Common myeloid progenitor, CD34-positive (primary cell): ENCODE measurements at regions of chr1 and their contacts with region 1.

Region 1: DNA sequence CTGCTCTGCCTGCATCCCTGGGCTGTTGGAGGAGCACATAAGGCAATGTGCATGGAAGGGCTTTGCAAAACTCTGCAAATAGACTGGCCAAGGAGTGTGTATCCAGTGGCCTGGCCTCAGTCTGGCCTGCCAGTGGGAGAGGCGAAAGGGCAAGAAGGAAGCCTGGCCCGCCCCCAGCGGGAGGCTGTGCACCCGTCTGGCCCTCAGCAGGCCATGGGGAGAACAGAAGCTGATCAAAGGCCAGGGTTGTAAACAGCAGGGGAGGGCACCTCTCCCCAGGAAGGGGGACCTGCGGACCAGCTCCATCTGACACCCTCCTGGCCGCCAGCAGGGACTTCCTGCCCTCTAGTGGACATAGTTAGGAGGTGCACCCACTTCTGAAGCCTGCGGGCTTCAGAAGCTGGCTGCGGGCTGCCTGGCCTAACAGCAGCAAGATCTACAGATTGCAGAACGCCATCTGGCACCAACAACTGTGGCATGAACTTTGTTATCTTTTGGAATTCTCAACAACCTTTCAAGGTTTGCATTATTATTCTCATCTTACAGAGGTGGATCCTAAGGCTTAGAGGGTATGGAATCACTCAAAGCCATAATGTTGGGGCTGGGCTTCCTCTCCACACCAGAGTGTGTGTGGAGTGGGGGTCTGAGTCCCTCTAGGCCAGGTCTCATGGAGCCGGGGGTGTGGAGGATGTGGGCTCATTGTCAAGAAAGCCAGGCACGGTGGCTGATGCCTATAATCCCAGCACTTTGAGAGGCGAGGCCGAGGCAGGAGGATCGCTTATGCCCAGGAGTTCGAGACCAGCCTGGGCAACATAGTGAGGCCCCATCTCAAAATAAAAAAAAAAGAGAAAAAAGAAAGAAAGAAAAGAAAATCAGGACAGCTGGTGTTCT is 18.9 kb upstream of the CDK18 start:
- DNase-seq: peak; percentile 72 to 89 (median 86)
- H3K4me3 ChIP-seq: no peak overlapping the region
- H3K27ac ChIP-seq: no peak overlapping the region
- H3K4me1 ChIP-seq: peaks cover 0 to 7% (median 0%) of the 10 kb centered on the region in 4 experiments
- H3K27me3 ChIP-seq: peaks cover 0 to 62% (median 29%) of the 10 kb centered on the region in 5 experiments

Region 2: DNA sequence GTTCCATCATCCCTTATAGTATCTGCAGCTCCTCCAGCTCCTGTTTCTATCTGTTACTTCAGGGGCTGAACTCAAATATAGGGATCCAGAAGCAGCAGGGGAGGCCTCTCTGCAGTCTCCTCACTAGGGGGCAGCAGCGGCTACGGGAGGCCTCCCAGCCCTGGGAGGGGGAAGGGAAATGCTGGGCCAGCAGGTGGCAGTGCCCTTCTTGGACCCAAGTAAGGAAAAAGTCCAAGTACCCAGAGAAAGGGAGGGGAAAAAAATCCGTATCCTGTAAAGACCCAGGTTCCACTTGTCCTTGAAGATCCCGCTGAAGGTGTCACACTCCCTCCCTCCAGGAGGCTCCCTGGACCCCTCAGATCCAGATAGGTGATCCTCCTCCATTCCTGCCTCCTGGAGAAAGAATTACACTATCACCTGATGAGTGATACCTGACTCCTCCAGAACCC is 149.9 kb before region 1 on chr1:
- CTCF ChIA-PET with region 1: interaction called, 22 read pairs
- POLR2A ChIA-PET with region 1: no interaction called
- DNase-seq: peak; percentile 80 to 84 (median 84)
- H3K4me3 ChIP-seq: no peak overlapping the region
- H3K27ac ChIP-seq: no peak overlapping the region
- H3K4me1 ChIP-seq: no peaks in the 10 kb centered on the region
- H3K27me3 ChIP-seq: peaks cover 0 to 5% (median 0%) of the 10 kb centered on the region in 5 experiments

Region 3: GRCh38 chr1:205374228-205375078 is 111.1 kb before region 1 on chr1:
- CTCF ChIA-PET with region 1: interaction called, 14 read pairs
- POLR2A ChIA-PET with region 1: no interaction called
- DNase-seq: no peak
- H3K4me3 ChIP-seq: no peak overlapping the region
- H3K27ac ChIP-seq: no peak overlapping the region
- H3K4me1 ChIP-seq: peaks cover 0 to 12% (median 2%) of the 10 kb centered on the region in 4 experiments
- H3K27me3 ChIP-seq: peaks cover 2 to 23% (median 13%) of the 10 kb centered on the region in 5 experiments

Region 4: DNA sequence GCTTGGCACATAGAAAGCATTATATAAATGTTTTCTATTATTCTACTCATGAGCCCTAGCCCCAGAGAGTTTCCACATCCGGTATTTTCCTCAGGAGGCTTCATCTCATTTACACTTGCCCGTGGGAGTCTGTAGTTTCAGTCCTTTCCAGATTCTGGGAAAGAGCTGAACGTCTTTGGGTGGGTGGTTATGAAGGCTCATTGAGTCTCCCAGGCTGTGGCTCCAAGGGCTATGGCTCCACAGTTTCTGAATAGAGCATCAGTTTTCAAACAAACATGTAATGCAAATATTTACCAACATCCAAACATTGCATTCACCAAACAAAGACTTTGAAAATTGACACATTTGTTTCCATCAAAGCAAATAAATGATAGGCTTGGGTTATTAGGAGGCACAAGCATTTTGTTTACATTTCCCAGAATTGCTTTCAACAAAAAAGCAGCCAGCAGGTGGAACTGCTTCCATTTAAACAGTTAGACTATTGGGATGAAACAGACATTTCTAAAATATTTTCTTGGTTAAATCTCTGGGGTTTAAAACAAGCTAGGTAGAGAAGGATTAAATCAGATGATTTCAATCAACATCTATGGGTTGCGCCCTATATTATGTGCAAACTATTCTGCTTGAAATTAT is 62.5 kb before region 1 on chr1:
- CTCF ChIA-PET with region 1: interaction called, 27 read pairs
- POLR2A ChIA-PET with region 1: no interaction called
- DNase-seq: no peak
- H3K4me3 ChIP-seq: no peak overlapping the region
- H3K27ac ChIP-seq: no peak overlapping the region
- H3K4me1 ChIP-seq: peaks cover 0 to 1% (median 0%) of the 10 kb centered on the region in 4 experiments
- H3K27me3 ChIP-seq: peaks cover 2 to 24% (median 8%) of the 10 kb centered on the region in 5 experiments

Region 5: GRCh38 chr1:205440476-205441317 is 44.9 kb before region 1 on chr1:
- CTCF ChIA-PET with region 1: interaction called, 14 read pairs
- POLR2A ChIA-PET with region 1: no interaction called
- DNase-seq: peak; percentile 62 to 84 (median 80)
- H3K4me3 ChIP-seq: peak overlapping the region in 4 of 7 experiments; percentile 29 to 59 (median 46)
- H3K27ac ChIP-seq: no peak overlapping the region
- H3K4me1 ChIP-seq: peaks cover 6 to 48% (median 41%) of the 10 kb centered on the region in 4 experiments
- H3K27me3 ChIP-seq: peaks cover 0 to 9% (median 0%) of the 10 kb centered on the region in 5 experiments